ENCODE measurements at regions of chr1 and their contacts with region 1.

Region 1: DNA sequence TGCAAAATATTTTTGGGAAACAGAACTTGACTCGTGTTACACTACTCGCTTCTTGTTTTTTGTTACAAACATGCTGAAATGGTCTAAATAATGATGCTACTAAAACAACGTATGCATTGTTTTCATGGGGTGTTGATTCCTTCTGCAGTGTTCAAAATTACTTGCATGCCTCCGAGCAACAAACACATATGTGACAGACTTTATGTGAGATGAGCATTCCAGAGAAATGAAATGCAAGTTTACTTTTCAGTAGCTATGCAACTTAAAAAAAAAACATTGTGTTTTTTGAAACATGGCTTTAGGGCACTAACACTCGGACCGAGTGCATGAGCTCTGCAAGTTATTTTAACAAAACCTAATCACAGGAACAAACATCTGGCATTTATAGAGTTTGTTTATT is 84.8 kb downstream of the CAMTA1 start:
- DNase-seq: no peak
- H3K4me3 ChIP-seq: no peak overlapping the region
- H3K27ac ChIP-seq: no peak overlapping the region
- H3K4me1 ChIP-seq: peaks cover 21% of the 10 kb centered on the region
- H3K27me3 ChIP-seq: no peaks in the 10 kb centered on the region
- CTCF ChIP-seq: no peak

Region 2: DNA sequence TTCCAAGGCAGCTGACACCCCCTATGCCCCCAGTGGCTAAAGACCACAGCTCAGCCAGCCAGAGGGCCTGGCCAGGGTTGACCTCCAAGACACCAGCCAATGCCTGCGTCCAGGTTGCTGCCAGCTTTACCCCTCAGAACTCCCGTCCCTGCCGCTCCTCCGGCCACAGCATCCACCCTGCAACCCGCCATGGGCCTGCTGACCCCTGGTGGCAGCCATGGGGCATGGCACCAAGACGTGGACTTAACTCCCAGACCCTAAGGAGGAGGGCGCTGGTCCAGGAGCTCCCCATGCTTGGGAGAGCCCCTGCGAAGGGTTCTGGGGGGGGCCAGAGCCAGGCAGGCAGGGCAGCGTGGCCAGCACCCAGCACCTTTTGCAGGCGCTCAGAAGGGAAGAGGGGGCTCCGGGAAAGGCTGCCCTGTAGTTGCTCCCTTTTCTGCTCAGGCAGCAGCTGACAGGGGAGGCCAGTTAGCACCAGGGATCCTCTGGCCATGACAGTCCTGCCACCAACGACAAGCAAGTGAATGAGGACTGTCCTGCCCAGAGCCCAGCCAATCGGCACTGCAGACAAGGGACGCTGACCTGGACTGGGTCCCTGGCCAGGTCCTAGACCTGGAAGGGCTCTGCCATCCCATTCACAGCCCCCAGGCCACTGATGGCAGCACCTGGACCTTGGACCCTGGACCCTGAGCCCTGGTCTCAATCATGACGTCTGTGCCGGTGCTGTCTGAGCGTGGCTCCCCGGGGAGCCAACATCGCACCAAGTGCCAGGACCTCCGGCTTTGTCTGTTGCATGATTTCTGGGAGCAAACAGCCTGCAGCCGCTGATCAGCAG is 1124.1 kb before region 1 on chr1:
- CTCF ChIA-PET with region 1: no interaction called
- dilution Hi-C with region 1: no loop called
- in situ Hi-C with region 1: no loop called
- intact Hi-C with region 1: no loop called
- DNase-seq: peak; percentile 47
- H3K4me3 ChIP-seq: no peak overlapping the region
- H3K27ac ChIP-seq: no peak overlapping the region
- H3K4me1 ChIP-seq: peaks cover 3% of the 10 kb centered on the region
- H3K27me3 ChIP-seq: no peaks in the 10 kb centered on the region
- CTCF ChIP-seq: peak; percentile 88 to 99

Region 3: DNA sequence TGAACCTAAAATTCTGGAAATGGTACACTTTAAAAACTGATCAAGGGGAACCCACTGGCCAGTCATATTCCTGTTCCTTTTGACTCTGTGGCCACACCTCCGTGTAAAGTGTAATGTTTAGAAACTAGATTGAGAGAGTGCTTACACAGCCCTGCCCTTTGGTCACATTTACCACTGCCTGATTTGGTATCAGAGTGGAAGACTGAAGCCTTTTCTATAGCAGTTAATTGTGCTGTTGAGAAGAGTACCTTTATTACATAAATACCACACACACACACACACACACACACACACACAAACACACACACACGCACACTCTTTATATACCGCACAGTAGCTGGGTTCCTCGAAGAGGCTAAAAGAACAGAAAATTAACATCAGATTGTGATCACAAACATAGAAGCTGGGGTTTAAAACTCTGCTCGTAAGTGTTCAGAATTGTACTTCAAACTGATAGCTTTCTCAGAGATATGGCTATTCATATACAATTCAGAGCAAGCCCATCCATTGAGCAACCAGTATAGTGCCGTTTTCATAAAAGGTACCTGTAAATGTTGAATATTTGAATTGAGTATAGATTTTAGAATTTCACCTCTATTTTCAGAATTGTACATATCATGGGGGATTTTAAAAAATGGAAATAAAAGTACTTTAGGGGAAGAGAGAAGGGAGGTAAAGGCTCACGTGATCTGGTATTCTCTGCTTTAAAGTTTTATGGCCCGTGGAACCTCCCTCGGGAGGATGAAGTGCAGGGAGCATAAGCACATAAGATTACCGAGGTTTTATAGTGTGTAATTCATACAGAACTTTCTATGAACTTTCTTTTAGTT is 47.3 kb before region 1 on chr1:
- CTCF ChIA-PET with region 1: no interaction called
- dilution Hi-C with region 1: loop called (anchors 5 kb)
- in situ Hi-C with region 1: no loop called
- intact Hi-C with region 1: no loop called
- DNase-seq: no peak
- H3K4me3 ChIP-seq: no peak overlapping the region
- H3K27ac ChIP-seq: no peak overlapping the region
- H3K4me1 ChIP-seq: no peaks in the 10 kb centered on the region
- H3K27me3 ChIP-seq: no peaks in the 10 kb centered on the region
- CTCF ChIP-seq: no peak